GM10248 (cell line): ENCODE measurements at regions of chrX and their contacts with region 1.

Region 1: DNA sequence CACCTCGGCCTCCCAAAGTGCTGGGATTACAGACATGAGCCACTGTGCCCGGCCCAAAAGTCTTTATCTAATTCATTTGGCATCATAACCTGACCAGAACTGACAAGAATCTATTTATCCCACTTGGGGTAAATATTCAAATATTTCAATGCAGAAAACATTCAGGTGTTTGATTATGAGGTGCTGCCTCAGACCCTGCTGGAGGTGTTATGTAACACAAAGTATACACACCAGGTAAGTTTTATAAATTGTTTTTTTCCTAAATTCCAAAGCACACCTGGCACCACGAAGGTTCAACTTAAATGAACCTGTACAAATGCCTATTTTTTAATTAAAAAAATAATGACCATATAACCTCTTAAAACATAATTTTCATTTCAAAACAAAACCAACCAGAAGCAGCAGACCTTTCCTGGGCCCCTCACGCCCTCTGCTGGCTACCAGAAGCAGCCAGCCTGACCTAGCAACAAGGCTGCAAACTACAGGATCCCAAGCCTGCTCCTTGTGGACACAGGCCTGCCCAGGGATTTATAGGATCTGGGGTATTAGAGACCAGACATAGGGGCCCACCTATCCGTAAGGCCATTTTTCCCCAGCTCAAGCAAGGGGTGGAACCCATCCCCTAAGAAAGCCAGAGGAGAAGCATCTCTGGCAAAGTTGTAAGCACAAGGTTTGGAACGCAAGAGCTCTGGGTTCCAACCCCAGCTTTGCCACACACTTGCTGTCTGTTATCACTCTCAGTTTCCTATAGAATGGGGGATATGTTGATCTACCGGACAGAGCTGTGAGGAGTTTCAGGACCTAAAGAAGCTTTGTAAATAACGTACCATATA is 11.7 kb downstream of the OTUD5 start:
- DNase-seq: peak; percentile 62
- CTCF ChIP-seq: peak; percentile 80

Region 2: DNA sequence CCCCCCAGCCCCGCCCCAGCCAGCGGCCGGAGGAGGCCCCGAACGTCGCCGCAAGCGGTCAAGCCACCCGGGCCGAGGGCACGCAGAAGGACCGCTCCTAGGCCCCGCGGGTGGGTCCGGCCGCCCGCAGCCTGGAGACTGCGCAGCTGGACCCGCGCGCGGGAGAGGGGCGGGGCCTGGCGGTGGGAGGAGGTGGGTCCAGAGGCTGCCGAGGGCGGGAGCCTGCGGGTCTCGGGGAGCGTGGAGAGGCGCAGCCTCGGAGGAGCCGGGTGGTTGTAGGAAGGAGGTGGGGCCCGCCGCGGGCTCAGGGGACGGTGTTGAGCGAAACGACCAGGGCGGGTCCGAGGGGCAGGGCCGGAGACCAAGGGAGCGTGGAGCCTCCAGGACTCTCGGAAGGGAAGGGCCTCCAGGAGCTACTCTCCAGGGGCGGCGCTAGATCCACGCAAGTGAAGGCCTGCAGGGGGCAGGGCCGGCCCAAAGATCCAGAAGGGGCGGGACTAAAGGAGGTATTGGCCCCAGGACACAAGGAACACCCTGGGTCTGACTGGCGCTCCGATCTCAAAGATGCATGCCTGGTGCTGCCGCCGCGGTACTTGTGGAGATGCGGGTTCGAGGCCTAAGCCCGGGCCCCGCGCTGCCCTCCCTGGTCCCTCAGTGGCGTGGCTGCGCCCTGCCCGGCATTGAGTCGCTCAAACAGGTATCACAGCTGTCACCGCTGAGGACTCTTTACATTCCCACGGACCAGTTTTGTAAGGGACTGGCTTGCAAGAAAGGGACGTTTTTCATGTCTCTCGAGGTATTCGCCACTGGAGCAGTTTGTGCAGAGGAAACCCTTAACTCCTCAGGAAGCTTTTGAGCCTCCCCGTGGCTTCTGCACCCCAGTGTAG is 54.1 kb before region 1 on chrX:
- CTCF ChIA-PET with region 1: interaction called, 14 read pairs
- POLR2A ChIA-PET with region 1: no interaction called
- DNase-seq: peak; percentile 70
- CTCF ChIP-seq: peak; percentile 54

Region 3: GRCh38 chrX:48897621-48898306 is 48.0 kb before region 1 on chrX and contains the starts of genes PQBP1 and TIMM17B:
- CTCF ChIA-PET with region 1: interaction called, 14 read pairs
- POLR2A ChIA-PET with region 1: no interaction called
- DNase-seq: peak; percentile 84
- CTCF ChIP-seq: no peak

Region 4: GRCh38 chrX:48911412-48912182 is 34.1 kb before region 1 on chrX and contains the start of gene SLC35A2:
- CTCF ChIA-PET with region 1: interaction called, 13 read pairs
- POLR2A ChIA-PET with region 1: interaction called, 8 read pairs
- DNase-seq: peak; percentile 77
- CTCF ChIP-seq: no peak

Region 5: DNA sequence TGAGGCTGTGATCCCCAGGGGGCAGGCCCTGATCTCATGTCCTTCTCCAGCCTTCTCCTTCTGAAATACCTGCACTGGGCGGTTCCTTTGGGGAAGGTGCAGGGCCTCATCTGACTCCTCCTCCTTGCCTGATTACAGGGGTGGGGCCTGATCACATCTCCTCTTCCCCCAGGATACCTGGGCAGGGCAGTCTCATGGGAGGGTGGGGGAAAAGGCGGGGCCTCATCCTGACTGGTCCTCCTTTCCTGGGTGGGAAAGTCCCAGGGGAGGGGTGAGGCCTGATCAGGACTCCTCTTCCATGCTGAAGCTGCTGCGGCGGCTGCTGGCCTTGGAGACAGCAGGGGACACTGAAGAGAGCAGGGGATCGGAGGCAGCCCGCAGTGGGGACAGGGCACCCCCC is 84.1 kb after region 1 on chrX:
- CTCF ChIA-PET with region 1: no interaction called
- POLR2A ChIA-PET with region 1: no interaction called
- DNase-seq: no peak
- CTCF ChIP-seq: no peak